Heart left ventricle (tissue), 16 donors: ENCODE measurements at regions of chr3 and their contacts with region 1.

Region 1: GRCh38 chr3:77513542-77513941 is 473.6 kb downstream of the ROBO2 start:
- DNase-seq: no peak
- ATAC-seq: no peak
- H3K4me3 ChIP-seq: no peak overlapping the region
- H3K27ac ChIP-seq: no peak overlapping the region
- H3K4me1 ChIP-seq: no peaks in the 10 kb centered on the region
- H3K27me3 ChIP-seq: no peaks in the 10 kb centered on the region
- CTCF ChIP-seq: no peak
- POLR2A ChIP-seq: no peak

Region 2: GRCh38 chr3:77449459-77450350 is 63.8 kb before region 1 on chr3:
- intact Hi-C with region 1: loop called in 1 of 10 experiments (anchors 10 kb)
- DNase-seq: no peak
- ATAC-seq: no peak
- H3K4me3 ChIP-seq: no peak overlapping the region
- H3K27ac ChIP-seq: no peak overlapping the region
- H3K4me1 ChIP-seq: no peaks in the 10 kb centered on the region
- H3K27me3 ChIP-seq: no peaks in the 10 kb centered on the region
- CTCF ChIP-seq: no peak
- POLR2A ChIP-seq: no peak